ENCODE measurements at regions of chr3 and their contacts with region 1.

Region 1: DNA sequence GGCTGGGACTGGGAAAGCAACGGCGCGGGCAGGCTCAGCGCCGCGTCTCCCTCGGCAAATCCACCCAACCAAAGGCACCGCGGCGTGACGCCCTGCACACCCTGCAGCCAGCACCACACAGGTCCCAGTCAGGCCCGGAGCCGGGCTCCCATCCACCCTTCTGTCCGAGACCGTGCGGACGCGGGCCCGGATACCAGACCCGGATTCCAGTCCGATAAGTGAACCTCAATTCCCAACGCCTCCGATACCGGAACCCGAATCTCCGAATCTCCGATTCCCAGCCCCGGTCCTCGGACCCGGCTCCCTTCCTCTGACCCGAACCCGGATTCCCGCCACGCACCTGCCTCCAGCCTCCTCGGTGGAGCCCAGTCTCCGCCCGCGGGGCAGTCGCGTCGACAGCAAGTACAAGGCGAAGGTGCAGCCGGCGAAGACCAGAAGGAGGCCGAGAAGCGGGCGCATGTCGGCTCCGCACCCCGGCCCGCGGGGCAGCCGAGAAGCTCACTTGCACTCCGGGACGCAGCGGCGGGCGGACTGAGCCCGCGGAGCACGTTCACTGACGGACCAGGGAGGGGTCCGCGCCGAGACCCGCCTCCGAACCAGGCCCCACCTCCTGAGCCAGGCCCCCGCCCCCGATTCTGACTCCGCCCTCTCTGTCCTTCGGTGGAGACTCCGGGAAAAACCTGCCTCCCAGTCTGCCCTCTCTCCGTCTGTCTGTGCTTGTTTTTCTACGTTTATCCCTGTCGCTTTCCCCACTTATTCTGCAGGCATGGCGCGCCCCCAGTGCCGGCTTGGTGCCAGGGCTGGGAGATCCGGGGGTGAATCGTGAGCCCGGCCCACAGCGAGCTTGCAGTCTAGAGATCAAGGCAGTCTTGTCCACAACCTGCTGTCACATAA is at the start of gene TMEM41A:
- DNase-seq: peak; percentile 81 to 98
- H3K4me3 ChIP-seq: peak within 1 kb of the TSS; percentile 78
- H3K27ac ChIP-seq: peak within 1 kb of the TSS; percentile 74
- H3K4me1 ChIP-seq: peaks cover 11% of the 10 kb centered on the region
- H3K27me3 ChIP-seq: no peaks in the 10 kb centered on the region
- CTCF ChIP-seq: 0 out of 2 replicates have a peak, but pooled peaks have one; percentile 17
- total RNA-seq, gene TMEM41A: 37.2 and 54.1 TPM in 2 replicates

Region 2: GRCh38 chr3:183825456-183826161 is 1673.1 kb before region 1 on chr3 and contains the start of gene MAP6D1:
- CTCF ChIA-PET with region 1: no interaction called
- POLR2A ChIA-PET with region 1: no interaction called
- intact Hi-C with region 1: no loop called
- DNase-seq: peak in 1 of 2 experiments; percentile 72
- H3K4me3 ChIP-seq: peak within 1 kb of the TSS; percentile 59; the same call in 1 of the 2 replicates
- H3K27ac ChIP-seq: no peak within 1 kb of the TSS
- H3K4me1 ChIP-seq: 0 out of 2 replicates have a peak, but pooled peaks cover 7% of the 10 kb centered on the region
- H3K27me3 ChIP-seq: no peaks in the 10 kb centered on the region
- CTCF ChIP-seq: no peak; the same call in 1 of the 2 replicates
- total RNA-seq, gene MAP6D1: 2.2 TPM in 2 replicates

Region 3: GRCh38 chr3:185282696-185283394 is 215.9 kb before region 1 on chr3:
- CTCF ChIA-PET with region 1: no interaction called
- POLR2A ChIA-PET with region 1: no interaction called
- intact Hi-C with region 1: loop called (anchors 2 kb)
- DNase-seq: peak; percentile 96 to 98
- H3K4me3 ChIP-seq: peak overlapping the region; percentile 95
- H3K27ac ChIP-seq: peak overlapping the region; percentile 55
- H3K4me1 ChIP-seq: peaks cover 8% of the 10 kb centered on the region
- H3K27me3 ChIP-seq: no peaks in the 10 kb centered on the region
- CTCF ChIP-seq: no peak

Region 4: GRCh38 chr3:185362850-185363661 is 135.7 kb before region 1 on chr3 and contains the start of gene MAP3K13:
- CTCF ChIA-PET with region 1: no interaction called
- POLR2A ChIA-PET with region 1: no interaction called
- intact Hi-C with region 1: loop called (anchors 10 kb)
- DNase-seq: peak; percentile 83 to 99
- H3K4me3 ChIP-seq: peak within 1 kb of the TSS; percentile 66
- H3K27ac ChIP-seq: peak within 1 kb of the TSS; percentile 55
- H3K4me1 ChIP-seq: peaks cover 24% of the 10 kb centered on the region
- H3K27me3 ChIP-seq: no peaks in the 10 kb centered on the region
- CTCF ChIP-seq: no peak
- total RNA-seq, gene MAP3K13: 42.2 and 65.5 TPM in 2 replicates

Measured in PC-9 (cell line).